ENCODE measurements at regions of chr17 and their contacts with region 1.

Region 1: DNA sequence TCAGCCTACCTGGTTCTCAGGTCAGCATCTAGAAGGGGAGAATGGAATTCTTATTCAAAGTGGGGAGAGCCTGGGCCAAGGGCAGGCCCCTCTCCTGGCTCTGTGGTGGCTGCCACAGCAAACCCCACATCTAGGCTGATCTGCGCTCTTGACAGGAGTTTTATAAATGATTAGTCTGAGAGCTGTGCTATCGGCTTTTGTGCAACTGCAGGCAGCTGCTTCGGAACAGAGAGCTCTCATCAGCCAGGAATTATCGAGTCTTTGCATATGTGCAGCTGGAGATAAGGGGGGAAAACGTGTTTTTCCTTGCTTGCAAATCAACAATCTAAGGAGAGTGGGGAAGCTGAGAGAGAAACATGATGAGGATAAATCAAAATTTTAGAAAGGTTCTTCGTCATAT is 91.7 kb downstream of the HS3ST3A1 start:
- H3K4me3 ChIP-seq: no peak overlapping the region
- H3K27ac ChIP-seq: no peak overlapping the region
- H3K4me1 ChIP-seq: no peaks in the 10 kb centered on the region
- CTCF ChIP-seq: no peak

Region 2: DNA sequence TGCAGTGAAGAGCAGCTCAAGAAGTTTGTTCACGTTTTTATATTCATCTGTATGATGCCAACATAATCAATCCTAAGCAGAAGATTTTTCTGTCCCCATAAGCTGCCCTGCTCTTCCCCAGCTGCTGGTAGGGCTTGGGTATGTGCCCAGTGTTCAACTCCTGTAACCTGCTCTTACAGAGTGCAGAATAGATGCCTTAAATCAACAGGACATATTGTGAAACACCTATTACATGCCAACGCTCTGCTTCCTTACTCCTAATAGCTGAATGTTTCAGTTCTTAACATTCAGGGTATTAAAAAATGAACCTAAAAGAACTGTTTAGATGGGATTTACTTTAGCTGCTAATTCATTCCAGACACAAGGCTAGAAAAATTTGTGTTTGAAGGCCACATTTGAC is 99.2 kb before region 1 on chr17:
- CTCF ChIA-PET with region 1: no interaction called
- POLR2A ChIA-PET with region 1: interaction called, 11 read pairs
- H3K4me3 ChIP-seq: no peak overlapping the region
- H3K27ac ChIP-seq: no peak overlapping the region
- H3K4me1 ChIP-seq: no peaks in the 10 kb centered on the region
- CTCF ChIP-seq: no peak

Region 3: GRCh38 chr17:13477180-13477611 is 32.9 kb before region 1 on chr17:
- CTCF ChIA-PET with region 1: no interaction called
- POLR2A ChIA-PET with region 1: no interaction called
- H3K4me3 ChIP-seq: no peak overlapping the region
- H3K27ac ChIP-seq: no peak overlapping the region
- H3K4me1 ChIP-seq: peaks cover 19% of the 10 kb centered on the region
- CTCF ChIP-seq: no peak

Region 4: DNA sequence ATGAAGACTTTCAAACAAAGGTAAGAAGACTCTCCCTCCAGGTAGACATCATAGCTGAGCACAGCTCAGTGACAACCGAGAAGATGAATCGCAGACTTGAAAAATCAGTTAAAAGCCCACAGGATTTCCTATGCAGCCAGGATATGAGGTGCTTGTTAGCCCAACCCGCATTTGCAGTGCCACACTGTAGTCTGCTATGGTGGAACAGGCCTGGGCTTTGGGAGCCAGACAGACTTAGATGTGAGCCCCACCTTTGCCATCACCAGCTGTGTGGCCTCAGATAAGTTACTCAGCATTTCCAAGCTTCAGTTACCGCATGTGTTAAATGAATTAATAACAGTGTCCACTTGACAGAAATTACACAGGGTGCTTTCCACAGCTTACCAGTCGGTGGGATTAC is 296.0 kb after region 1 on chr17:
- CTCF ChIA-PET with region 1: no interaction called
- POLR2A ChIA-PET with region 1: no interaction called
- H3K4me3 ChIP-seq: no peak overlapping the region
- H3K27ac ChIP-seq: no peak overlapping the region
- H3K4me1 ChIP-seq: no peaks in the 10 kb centered on the region
- CTCF ChIP-seq: no peak